BJ (cell line): ENCODE measurements at regions of chr11 and their contacts with region 1.

Region 1: DNA sequence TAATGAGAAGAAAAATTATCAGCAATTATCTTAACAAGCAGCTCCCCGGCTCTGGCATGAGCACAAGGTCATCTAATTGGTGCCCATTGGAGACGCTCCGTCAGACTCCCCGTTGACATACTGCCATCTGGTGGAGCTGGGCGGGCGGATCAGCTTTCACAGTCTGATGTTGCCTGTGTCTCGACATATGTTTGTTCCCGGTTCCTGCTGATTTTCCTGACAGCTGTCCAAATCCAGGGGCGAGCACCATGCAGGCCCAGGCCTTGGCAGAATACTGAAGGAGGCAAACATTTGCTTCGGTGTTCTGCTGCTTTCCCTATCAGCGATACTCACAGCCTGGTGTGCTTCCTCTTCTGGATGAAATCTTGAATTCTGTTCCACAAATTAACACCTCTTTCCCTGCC is 43.8 kb upstream of the BARX2 start:
- DNase-seq: no peak
- H3K4me3 ChIP-seq: no peak overlapping the region
- H3K27me3 ChIP-seq: no peaks in the 10 kb centered on the region
- CTCF ChIP-seq: peak; percentile 95

Region 2: GRCh38 chr11:129117595-129118350 is 214.1 kb before region 1 on chr11:
- CTCF ChIA-PET with region 1: interaction called, 53 read pairs
- POLR2A ChIA-PET with region 1: no interaction called
- DNase-seq: peak; percentile 16
- H3K4me3 ChIP-seq: no peak overlapping the region
- H3K27me3 ChIP-seq: no peaks in the 10 kb centered on the region
- CTCF ChIP-seq: peak; percentile 91

Region 3: GRCh38 chr11:129230006-129230405 is 101.9 kb before region 1 on chr11:
- CTCF ChIA-PET with region 1: interaction called, 14 read pairs
- POLR2A ChIA-PET with region 1: no interaction called
- DNase-seq: no peak
- H3K4me3 ChIP-seq: no peak overlapping the region
- H3K27me3 ChIP-seq: no peaks in the 10 kb centered on the region
- CTCF ChIP-seq: no peak

Region 4: GRCh38 chr11:129267716-129268115 is 64.2 kb before region 1 on chr11:
- CTCF ChIA-PET with region 1: no interaction called
- POLR2A ChIA-PET with region 1: no interaction called
- DNase-seq: no peak
- H3K4me3 ChIP-seq: no peak overlapping the region
- H3K27me3 ChIP-seq: no peaks in the 10 kb centered on the region
- CTCF ChIP-seq: no peak